ENCODE measurements at regions of chr11 and their contacts with region 1.

Region 1: GRCh38 chr11:102346748-102347461 is at the start of gene BIRC2:
- DNase-seq: peak; percentile 85 to 96
- H3K4me3 ChIP-seq: peak within 1 kb of the TSS; percentile 69
- H3K27ac ChIP-seq: peak within 1 kb of the TSS; percentile 87
- H3K4me1 ChIP-seq: peaks cover 29% of the 10 kb centered on the region
- H3K27me3 ChIP-seq: no peaks in the 10 kb centered on the region
- CTCF ChIP-seq: peak; percentile 74
- total RNA-seq, gene BIRC2: 33.7 and 37.5 TPM in 2 replicates

Region 2: DNA sequence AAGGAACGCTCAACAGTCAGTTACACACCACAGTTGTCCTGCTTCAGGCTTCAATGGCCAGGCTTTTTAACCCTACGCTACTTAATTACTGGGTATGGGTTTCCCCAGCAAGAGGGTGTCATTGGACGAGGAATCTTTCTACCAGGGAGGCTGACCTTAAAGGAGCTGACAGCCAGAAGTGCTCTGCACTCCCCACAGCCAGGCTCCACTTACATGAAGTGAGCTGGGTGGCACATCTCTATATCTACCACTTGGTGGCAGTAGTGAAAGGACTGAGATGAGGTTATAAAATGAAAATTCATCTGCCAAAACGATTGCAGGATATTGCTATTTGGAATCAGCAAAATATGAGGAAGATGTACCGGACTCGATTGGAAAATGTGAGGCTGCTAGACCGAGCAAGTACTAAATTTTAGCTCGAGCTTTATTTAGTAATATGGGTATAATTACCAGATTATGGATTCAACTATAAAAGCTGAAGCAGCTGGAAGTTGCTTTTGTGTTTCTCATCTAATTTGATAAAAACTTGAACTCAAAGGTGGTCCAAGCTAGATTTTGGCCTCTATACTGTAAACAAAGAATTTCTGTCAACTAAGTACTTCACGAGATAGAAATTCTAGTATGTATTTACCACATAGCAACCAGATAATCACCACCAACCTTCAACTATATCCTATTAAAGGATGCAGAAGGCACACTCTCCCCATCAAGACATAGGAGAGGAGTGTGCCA is 486.0 kb before region 1 on chr11:
- CTCF ChIA-PET with region 1: no interaction called
- POLR2A ChIA-PET with region 1: no interaction called
- intact Hi-C with region 1: loop called (anchors 2 kb)
- DNase-seq: peak; percentile 30 to 68
- H3K4me3 ChIP-seq: no peak overlapping the region
- H3K27ac ChIP-seq: no peak overlapping the region
- H3K4me1 ChIP-seq: peaks cover 20% of the 10 kb centered on the region
- H3K27me3 ChIP-seq: no peaks in the 10 kb centered on the region
- CTCF ChIP-seq: peak; percentile 89

Region 3: GRCh38 chr11:102287964-102288724 is 58.8 kb before region 1 on chr11:
- CTCF ChIA-PET with region 1: interaction called, 4 read pairs
- POLR2A ChIA-PET with region 1: no interaction called
- intact Hi-C with region 1: loop called (anchors 2 kb)
- DNase-seq: peak; percentile 38 to 67
- H3K4me3 ChIP-seq: no peak overlapping the region
- H3K27ac ChIP-seq: no peak overlapping the region
- H3K4me1 ChIP-seq: peaks cover 24% of the 10 kb centered on the region
- H3K27me3 ChIP-seq: no peaks in the 10 kb centered on the region
- CTCF ChIP-seq: peak; percentile 92

Region 4: DNA sequence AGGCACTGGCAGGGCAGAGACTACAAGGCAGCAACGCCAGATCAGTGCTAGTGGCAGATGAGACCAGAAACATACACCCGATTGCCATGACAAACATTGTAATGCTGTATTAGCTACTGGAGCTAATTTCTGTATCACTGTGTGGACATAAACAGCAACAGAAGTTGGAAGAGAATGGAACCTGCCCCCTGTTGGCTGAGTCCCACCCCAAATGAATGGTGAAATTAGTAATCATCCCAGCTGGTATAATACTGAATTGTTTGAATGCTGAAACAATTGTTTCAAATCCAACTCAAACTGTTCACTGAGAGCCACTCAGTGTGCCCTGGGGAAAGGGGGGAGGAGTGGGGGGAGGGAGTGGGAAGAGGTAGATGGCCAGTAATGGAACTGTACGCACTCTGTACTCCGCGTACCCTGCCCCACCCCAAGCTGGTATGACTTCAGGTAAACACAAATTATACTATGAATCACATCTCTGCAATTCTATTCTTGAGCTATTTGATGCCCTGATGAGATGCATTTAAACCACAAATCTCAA is 40.8 kb before region 1 on chr11:
- CTCF ChIA-PET with region 1: interaction called, 9 read pairs
- POLR2A ChIA-PET with region 1: no interaction called
- intact Hi-C with region 1: loop called (anchors 5 kb)
- DNase-seq: peak; percentile 83 to 98
- H3K4me3 ChIP-seq: peak overlapping the region; percentile 33; the same call in 1 of the 2 replicates
- H3K27ac ChIP-seq: peak overlapping the region; percentile 85
- H3K4me1 ChIP-seq: peaks cover 37% of the 10 kb centered on the region
- H3K27me3 ChIP-seq: no peaks in the 10 kb centered on the region
- CTCF ChIP-seq: peak; percentile 66

Region 5: DNA sequence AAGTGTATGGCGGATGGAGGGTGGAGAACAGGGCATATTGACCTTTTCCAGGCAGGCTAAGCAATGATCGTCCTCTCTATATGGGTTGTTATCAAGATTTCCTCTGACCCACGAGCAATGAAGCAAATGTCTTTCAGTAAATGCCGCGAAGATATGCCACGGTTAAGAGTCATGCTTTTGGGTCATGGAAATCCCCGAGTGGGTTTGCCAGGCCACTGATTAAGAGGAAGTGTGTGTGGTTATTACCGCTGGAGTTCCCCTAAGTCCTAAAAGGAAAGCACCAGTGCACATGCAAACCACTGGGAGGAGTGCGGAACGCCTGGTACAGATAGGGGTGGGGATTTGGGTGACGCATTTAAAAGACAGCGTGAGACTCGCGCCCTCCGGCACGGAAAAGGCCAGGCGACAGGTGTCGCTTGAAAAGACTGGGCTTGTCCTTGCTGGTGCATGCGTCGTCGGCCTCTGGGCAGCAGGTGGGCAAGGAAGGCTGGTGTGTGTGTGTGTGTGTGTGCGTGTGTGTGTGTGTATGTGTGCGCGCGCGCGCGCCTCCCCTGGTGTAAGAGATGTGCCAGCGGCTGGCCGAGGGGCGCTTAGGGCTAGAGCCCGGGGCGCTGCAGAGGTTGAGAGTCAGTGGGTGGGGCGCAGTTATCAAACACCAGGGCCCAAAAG is 29.7 kb before region 1 on chr11 and contains the start of gene BIRC3:
- CTCF ChIA-PET with region 1: interaction called, 9 read pairs
- POLR2A ChIA-PET with region 1: interaction called, 4 read pairs
- intact Hi-C with region 1: loop called (anchors 1 kb)
- DNase-seq: peak; percentile 87 to 97
- H3K4me3 ChIP-seq: peak within 1 kb of the TSS; percentile 67
- H3K27ac ChIP-seq: peak within 1 kb of the TSS; percentile 80
- H3K4me1 ChIP-seq: peaks cover 26% of the 10 kb centered on the region
- H3K27me3 ChIP-seq: no peaks in the 10 kb centered on the region
- CTCF ChIP-seq: peak; percentile 31; the same call in 1 of the 2 replicates
- total RNA-seq, gene BIRC3: 3.8 and 4.8 TPM in 2 replicates

Region 6: GRCh38 chr11:102464859-102465500 is 118.1 kb after region 1 on chr11:
- CTCF ChIA-PET with region 1: no interaction called
- POLR2A ChIA-PET with region 1: no interaction called
- intact Hi-C with region 1: no loop called
- DNase-seq: no peak
- H3K4me3 ChIP-seq: no peak overlapping the region
- H3K27ac ChIP-seq: no peak overlapping the region
- H3K4me1 ChIP-seq: peaks cover 37% of the 10 kb centered on the region
- H3K27me3 ChIP-seq: no peaks in the 10 kb centered on the region
- CTCF ChIP-seq: no peak

Measured in PC-9 (cell line).